Activated T-helper 2 cell treated with anti-CD3 and anti-CD28 coated beads, Interferon-gamma antibody, Interleukin-2, Interleukin-4, amounts not matched to agents 10 μg/mL and 5 μg/mL and 100 μg/mL, durations not matched to agents 14 hours and 24 hours and 36 hours (primary cell): ENCODE measurements at regions of chr3 and their contacts with region 1.

Region 1: DNA sequence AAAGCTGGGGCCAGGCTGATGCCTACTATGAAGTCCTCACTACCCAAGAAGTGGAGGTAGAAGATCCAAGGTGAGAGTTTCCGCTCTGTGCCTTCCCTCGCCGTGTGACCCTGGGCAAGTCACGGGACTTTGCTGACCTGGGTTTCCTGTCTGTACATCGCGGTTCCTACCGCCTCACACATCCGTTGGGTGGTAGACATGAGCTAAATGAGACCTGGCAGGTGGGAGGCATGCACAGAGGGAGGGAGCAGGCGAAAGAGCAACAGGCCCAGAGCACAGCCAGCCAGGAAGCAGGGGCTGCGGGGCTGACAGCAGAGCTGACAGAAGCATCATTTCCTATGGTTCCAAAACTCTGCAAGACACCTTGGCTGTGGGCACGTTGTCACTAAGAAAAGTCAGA is 157.3 kb upstream of the BHLHE40 start:
- DNase-seq: peak; percentile 77
- H3K4me3 Mint-ChIP-seq: peak overlapping the region; percentile 20
- H3K27ac Mint-ChIP-seq: peak overlapping the region; percentile 93
- H3K4me1 Mint-ChIP-seq: peaks cover 84% of the 10 kb centered on the region
- H3K27me3 Mint-ChIP-seq: no peaks in the 10 kb centered on the region

Region 2: GRCh38 chr3:4741404-4742307 is 80.3 kb before region 1 on chr3:
- intact Hi-C with region 1: loop called (anchors 2 kb)
- DNase-seq: no peak
- H3K4me3 Mint-ChIP-seq: no peak overlapping the region
- H3K27ac Mint-ChIP-seq: peak overlapping the region; percentile 87
- H3K4me1 Mint-ChIP-seq: peaks cover 67% of the 10 kb centered on the region
- H3K27me3 Mint-ChIP-seq: no peaks in the 10 kb centered on the region

Region 3: DNA sequence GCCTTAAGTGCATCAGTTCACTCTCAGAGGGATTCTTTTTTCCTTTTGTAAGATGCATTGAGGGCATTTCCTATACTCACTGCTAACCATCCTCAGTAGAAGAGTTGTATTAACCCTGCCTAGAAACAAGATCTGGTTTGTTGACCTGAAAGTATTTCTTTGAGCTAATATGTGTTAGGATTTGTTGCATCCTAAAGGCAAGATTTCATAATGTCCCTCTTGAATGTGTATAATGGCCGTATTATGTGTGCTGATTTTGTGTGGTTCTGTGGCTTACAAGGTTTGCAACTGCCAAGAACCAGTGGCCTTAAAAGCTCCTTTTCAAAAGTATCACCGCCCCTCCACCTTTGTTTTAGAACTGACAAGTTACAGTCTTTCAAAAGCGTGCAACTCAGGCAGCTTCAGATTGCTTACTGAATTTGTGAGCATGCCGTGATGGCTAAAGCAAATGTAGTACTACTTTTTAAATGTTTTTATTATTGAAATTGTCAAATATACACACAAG is 24.7 kb before region 1 on chr3:
- intact Hi-C with region 1: no loop called
- DNase-seq: no peak
- H3K4me3 Mint-ChIP-seq: no peak overlapping the region
- H3K27ac Mint-ChIP-seq: no peak overlapping the region
- H3K4me1 Mint-ChIP-seq: peaks cover 11% of the 10 kb centered on the region
- H3K27me3 Mint-ChIP-seq: no peaks in the 10 kb centered on the region

Region 4: DNA sequence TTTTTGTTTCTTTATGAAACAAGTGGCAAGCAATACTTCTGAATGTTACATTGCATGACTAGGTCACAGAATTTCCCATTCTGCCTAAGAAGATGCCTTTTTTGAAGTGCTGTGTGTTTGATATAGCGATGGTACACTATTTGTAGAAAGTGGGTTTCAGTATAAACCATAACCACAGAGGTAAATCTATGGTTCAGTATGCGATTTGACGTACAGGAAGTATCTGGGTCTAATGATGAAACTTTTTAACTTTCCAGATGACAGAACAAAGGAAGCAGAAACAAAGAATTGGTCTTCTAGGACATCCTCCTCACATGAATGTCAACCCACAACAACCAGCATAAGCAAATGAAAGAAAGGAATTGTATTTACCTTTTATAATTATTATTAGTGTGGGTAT is 23.9 kb after region 1 on chr3:
- intact Hi-C with region 1: loop called (anchors 1 kb)
- DNase-seq: no peak
- H3K4me3 Mint-ChIP-seq: no peak overlapping the region
- H3K27ac Mint-ChIP-seq: peak overlapping the region; percentile 82
- H3K4me1 Mint-ChIP-seq: peaks cover 90% of the 10 kb centered on the region
- H3K27me3 Mint-ChIP-seq: no peaks in the 10 kb centered on the region